ENCODE measurements at regions of chr1 and their contacts with region 1.

Region 1: GRCh38 chr1:161292631-161293030 is 17.1 kb downstream of the MPZ start:
- DNase-seq: no peak
- H3K4me3 ChIP-seq: no peak overlapping the region
- CTCF ChIP-seq: no peak

Region 2: DNA sequence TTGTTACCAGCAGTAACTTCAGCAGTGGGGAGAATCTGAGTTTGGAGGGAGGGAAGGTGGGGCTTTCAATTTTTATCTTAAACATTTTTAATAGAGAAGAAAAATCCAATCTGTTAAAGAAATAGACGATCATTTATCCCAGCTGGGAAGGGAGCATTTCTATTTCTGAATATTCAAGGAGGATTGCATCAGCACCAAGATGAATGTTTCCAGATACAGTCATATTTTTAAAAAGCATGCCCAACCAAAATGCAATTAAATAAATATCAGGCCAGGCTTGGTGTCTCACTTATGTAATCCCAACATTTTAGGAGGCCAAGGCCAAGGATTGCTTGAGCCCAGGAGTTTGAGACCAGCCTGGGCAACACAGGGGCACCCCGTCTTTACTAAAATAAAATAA is 1142.9 kb before region 1 on chr1:
- CTCF ChIA-PET with region 1: no interaction called
- POLR2A ChIA-PET with region 1: no interaction called
- DNase-seq: peak; percentile 33
- H3K4me3 ChIP-seq: no peak overlapping the region
- CTCF ChIP-seq: no peak

Region 3: GRCh38 chr1:161192476-161193465 is 99.9 kb before region 1 on chr1:
- CTCF ChIA-PET with region 1: interaction called, 24 read pairs
- POLR2A ChIA-PET with region 1: no interaction called
- DNase-seq: no peak
- H3K4me3 ChIP-seq: no peak overlapping the region
- CTCF ChIP-seq: peak; percentile 90

Region 4: DNA sequence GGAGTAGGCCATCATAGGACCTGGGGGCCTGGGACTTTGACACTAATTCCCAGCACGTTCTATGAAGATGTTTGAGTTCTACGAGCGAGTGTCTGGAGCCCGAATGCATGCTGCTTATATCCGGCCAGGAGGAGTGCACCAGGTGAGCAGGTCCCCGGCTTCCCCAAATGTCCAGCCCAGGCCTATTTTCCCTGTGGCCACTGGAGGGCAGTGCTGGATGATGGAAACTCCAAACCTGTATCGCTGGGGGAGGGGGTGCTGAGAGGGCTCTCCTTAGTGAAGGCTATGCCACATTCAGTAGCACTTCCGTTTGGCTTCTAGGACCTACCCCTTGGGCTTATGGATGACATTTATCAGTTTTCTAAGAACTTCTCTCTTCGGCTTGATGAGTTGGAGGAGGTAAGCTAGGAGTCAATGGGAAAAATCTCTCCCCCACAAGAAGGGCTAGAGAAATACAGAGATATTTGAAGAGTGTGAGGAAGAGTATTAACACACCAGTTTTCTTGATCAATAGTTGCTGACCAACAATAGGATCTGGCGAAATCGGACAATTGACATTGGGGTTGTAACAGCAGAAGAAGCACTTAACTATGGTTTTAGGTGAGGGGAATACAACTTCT is 82.7 kb before region 1 on chr1:
- CTCF ChIA-PET with region 1: interaction called, 37 read pairs
- POLR2A ChIA-PET with region 1: no interaction called
- DNase-seq: no peak
- H3K4me3 ChIP-seq: no peak overlapping the region
- CTCF ChIP-seq: peak; percentile 90

Region 5: GRCh38 chr1:161238039-161238473 is 54.6 kb before region 1 on chr1 and contains the start of gene NR1I3:
- CTCF ChIA-PET with region 1: interaction called, 17 read pairs
- POLR2A ChIA-PET with region 1: no interaction called
- DNase-seq: no peak
- H3K4me3 ChIP-seq: no peak within 1 kb of the TSS
- CTCF ChIP-seq: no peak

Region 6: DNA sequence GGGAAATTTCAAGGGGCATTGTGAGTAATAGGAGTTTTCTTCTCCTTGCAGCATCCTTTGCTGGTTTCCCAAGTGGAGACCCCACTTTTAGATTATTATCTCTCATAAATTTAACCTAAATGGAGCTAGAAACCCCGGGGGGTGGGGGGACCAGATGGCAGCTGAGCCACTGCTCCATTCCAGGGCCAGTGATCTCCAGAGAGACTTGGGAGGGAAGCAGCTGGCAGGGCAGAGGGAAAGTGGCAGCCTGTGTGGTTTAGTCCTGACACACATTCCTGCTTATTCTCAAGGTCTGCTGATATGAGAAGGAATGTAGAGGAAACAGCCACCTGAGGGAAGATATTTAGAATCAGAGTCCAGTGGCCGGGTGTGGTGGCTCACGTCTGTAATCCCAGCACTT is 17.8 kb before region 1 on chr1:
- CTCF ChIA-PET with region 1: interaction called, 14 read pairs
- POLR2A ChIA-PET with region 1: no interaction called
- DNase-seq: no peak
- H3K4me3 ChIP-seq: no peak overlapping the region
- CTCF ChIP-seq: no peak

Region 7: DNA sequence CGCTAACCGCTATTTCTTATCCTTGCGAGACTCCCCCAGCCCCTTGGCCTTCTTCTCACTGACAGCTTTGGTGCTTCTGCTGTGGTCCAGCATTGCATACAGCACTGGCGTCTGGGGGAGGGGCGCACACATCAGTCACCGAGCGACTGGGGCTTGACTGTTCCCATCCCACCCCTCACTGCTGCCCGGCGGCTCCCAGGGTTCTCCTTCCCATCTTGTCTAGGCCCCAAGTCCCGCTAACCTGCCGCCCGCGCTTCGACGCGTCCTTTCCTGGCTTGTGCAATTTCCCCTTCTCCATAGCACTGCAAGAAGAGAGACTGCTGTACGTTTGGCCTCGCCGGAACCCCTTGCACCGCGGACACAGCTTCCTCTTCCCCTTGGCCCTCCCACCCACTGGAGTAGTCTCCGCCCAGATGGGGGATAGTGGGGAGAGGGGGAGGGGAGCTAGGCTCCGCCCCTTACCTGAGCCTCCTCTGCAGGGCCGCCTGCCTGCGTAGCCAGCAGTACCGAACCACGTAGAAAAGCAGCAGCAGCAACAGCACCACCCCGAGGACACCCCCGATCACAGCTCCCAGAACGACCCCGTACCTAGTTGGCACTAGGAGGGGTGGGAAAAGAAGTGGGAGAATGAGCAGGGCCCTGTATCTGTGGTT is 13.4 kb after region 1 on chr1:
- CTCF ChIA-PET with region 1: interaction called, 24 read pairs
- POLR2A ChIA-PET with region 1: no interaction called
- DNase-seq: no peak
- H3K4me3 ChIP-seq: peak overlapping the region; percentile 74
- CTCF ChIP-seq: peak; percentile 14

Region 8: GRCh38 chr1:161314201-161314981 is 21.8 kb after region 1 on chr1 and contains the start of gene SDHC:
- CTCF ChIA-PET with region 1: interaction called, 13 read pairs
- POLR2A ChIA-PET with region 1: no interaction called
- DNase-seq: no peak
- H3K4me3 ChIP-seq: peak within 1 kb of the TSS; percentile 95
- CTCF ChIP-seq: peak; percentile 65

Region 9: DNA sequence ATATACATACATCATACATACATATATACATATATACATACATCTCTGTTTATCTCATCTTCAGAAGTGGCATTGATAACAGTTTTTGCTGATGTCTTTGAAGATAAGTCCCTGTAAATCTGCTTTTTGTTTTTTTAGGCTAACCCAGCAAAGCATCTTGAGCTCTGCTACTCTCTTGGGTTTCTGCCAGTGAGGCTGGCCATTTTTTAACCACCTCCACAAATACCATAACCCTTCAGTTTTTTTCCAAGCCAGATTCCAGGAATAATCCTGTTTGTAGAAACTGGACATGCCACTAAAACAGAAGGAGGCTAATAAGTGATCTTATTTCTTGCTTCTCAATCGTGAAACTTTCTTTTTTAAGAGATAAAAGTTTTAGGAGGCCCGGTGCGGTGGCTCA is 43.2 kb after region 1 on chr1:
- CTCF ChIA-PET with region 1: no interaction called
- POLR2A ChIA-PET with region 1: no interaction called
- DNase-seq: no peak
- H3K4me3 ChIP-seq: no peak overlapping the region
- CTCF ChIP-seq: no peak

Region 10: GRCh38 chr1:162117039-162117774 is 824.6 kb after region 1 on chr1:
- CTCF ChIA-PET with region 1: no interaction called
- POLR2A ChIA-PET with region 1: no interaction called
- DNase-seq: no peak
- H3K4me3 ChIP-seq: no peak overlapping the region
- CTCF ChIP-seq: no peak

Region 11: GRCh38 chr1:162726555-162726954 is 1433.9 kb after region 1 on chr1:
- CTCF ChIA-PET with region 1: no interaction called
- POLR2A ChIA-PET with region 1: no interaction called
- DNase-seq: no peak
- H3K4me3 ChIP-seq: no peak overlapping the region
- CTCF ChIP-seq: no peak

Measured in AG04449 (cell line).